ENCODE measurements at regions of chr9 and their contacts with region 1.

Region 1: DNA sequence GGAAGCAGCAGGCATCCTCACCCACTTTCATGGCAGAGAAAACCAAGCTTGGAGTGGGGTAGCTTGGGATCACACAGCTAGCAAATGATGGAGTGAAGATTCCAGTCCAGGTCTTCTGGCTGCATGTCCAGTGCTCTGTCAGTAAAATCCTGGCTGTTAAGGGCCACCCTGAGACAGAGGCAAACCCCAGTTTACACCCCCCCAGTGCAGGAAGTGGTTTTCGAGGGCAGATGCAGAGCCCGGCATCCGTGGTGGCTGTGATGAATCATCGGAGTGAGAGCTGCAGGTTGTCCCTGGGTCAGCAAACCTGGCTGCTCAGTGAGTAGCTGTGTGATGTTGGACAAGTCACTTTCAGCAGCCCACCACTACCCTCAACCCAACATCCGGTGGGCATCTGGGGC is 115.4 kb downstream of the RGS3 start:
- DNase-seq: peak; percentile 68
- ATAC-seq: peak; percentile 48
- H3K4me3 Mint-ChIP-seq: peak overlapping the region; percentile 53
- H3K27ac Mint-ChIP-seq: peak overlapping the region; percentile 94
- H3K4me1 Mint-ChIP-seq: peaks cover 79% of the 10 kb centered on the region
- H3K27me3 Mint-ChIP-seq: no peaks in the 10 kb centered on the region
- CTCF ChIP-seq: no peak

Region 2: GRCh38 chr9:113150670-113151611 is 427.9 kb before region 1 on chr9 and contains the start of gene SLC31A2:
- CTCF ChIA-PET with region 1: no interaction called
- POLR2A ChIA-PET with region 1: no interaction called
- intact Hi-C with region 1: loop called (anchors 1 kb)
- DNase-seq: peak; percentile 80
- ATAC-seq: peak; percentile 94
- H3K4me3 Mint-ChIP-seq: peak within 1 kb of the TSS; percentile 84
- H3K27ac Mint-ChIP-seq: no peak within 1 kb of the TSS
- H3K4me1 Mint-ChIP-seq: peaks cover 13% of the 10 kb centered on the region
- H3K27me3 Mint-ChIP-seq: peaks cover 2% of the 10 kb centered on the region
- CTCF ChIP-seq: no peak
- total RNA-seq, gene SLC31A2: 0.93 and 1.1 TPM in 2 replicates

Region 3: DNA sequence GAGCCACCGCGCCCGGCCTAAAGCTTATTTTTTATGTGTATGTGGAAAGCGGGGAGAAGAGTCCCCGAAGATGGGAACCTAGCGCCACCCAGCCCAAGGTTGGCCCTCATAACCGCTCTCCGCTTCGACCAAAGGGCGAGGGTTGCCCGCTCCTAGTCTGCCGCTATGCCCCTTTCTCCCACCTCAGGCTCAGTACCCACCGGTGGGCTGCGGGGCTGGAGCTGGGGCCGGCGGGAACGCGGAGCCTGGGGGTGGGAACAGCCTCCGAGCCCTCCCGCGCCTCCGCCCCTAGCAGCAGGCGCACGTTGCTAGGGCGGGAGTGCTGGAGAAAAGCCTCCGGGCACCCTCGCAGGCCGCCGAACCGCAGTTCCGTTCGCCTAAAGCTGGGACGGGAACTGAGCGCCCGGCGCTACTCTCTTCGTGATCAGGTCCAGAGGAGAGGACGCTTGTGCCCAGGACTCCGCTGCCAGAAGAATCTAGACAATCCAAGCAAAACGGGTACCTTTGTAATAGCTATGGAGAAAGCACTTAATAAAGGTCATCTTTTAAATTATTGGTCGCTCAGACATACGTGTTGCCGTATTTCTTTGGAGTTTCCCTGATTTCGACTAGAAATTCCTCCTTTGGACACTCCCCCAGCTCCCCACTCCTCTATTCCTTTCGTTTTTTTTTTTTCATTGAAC is 238.7 kb before region 1 on chr9 and contains the start of gene WDR31:
- CTCF ChIA-PET with region 1: no interaction called
- POLR2A ChIA-PET with region 1: no interaction called
- intact Hi-C with region 1: loop called (anchors 2 kb)
- DNase-seq: peak; percentile 78
- ATAC-seq: peak; percentile 98
- H3K4me3 Mint-ChIP-seq: peak within 1 kb of the TSS; percentile 84
- H3K27ac Mint-ChIP-seq: peak within 1 kb of the TSS; percentile 74
- H3K4me1 Mint-ChIP-seq: peaks cover 11% of the 10 kb centered on the region
- H3K27me3 Mint-ChIP-seq: peaks cover 3% of the 10 kb centered on the region
- CTCF ChIP-seq: no peak
- total RNA-seq, gene WDR31: 0.73 and 1.6 TPM in 2 replicates

Region 4: GRCh38 chr9:113410207-113410864 is 168.5 kb before region 1 on chr9 and contains the starts of genes C9orf43 and POLE3:
- CTCF ChIA-PET with region 1: interaction called, 6 read pairs
- POLR2A ChIA-PET with region 1: interaction called, 83 read pairs
- intact Hi-C with region 1: loop called (anchors 1 kb)
- DNase-seq: peak; percentile 94
- ATAC-seq: peak; percentile 89
- H3K4me3 Mint-ChIP-seq: peak within 1 kb of the TSS; percentile 98
- H3K27ac Mint-ChIP-seq: peak within 1 kb of the TSS; percentile 99
- H3K4me1 Mint-ChIP-seq: peaks cover 31% of the 10 kb centered on the region
- H3K27me3 Mint-ChIP-seq: no peaks in the 10 kb centered on the region
- CTCF ChIP-seq: no peak
- total RNA-seq, gene C9orf43: 0.76 and 1.2 TPM in 2 replicates
- total RNA-seq, gene POLE3: 48.0 and 55.5 TPM in 2 replicates

Region 5: DNA sequence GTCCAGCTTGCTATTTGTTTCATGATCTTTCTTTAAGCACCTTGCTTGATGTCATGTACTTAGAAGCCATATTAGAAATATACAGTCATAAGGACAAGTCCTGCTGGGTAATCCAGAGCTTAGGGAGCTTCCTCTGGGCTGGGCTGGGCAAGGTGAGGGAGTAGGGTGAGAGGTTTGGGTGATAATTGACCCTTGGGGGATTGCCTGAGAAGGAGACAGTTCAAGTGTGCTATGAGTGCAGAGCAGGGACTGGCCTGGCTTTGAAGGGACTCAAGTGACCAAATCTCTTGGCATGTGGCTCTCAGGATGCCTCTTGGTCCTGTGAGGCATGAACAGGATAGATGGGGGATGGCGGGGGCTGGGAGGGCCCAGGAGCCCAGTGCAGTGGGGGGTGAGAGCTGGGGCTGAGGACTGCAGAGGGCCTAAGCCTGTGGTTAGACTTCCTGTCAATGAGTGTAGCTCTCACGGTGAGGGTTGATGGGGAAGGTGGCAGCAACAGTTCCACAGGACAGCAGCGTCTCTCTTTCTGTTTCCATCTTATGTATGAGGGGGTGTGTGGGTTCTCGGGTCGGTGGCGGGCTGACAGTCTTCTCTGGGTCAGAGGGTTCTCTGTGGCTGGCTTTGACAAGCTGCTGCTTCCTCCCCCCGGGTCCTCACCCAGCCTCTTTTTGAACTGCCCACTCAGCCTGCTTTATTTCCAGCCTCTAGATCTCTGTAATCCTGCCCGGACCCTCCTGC is 61.9 kb before region 1 on chr9:
- CTCF ChIA-PET with region 1: interaction called, 4 read pairs
- POLR2A ChIA-PET with region 1: interaction called, 17 read pairs
- intact Hi-C with region 1: loop called (anchors 1 kb)
- DNase-seq: peak; percentile 26
- ATAC-seq: peak; percentile 95
- H3K4me3 Mint-ChIP-seq: peak overlapping the region; percentile 62
- H3K27ac Mint-ChIP-seq: peak overlapping the region; percentile 83
- H3K4me1 Mint-ChIP-seq: peaks cover 29% of the 10 kb centered on the region
- H3K27me3 Mint-ChIP-seq: no peaks in the 10 kb centered on the region
- CTCF ChIP-seq: no peak

Region 6: GRCh38 chr9:113591001-113591898 is 12.4 kb after region 1 on chr9:
- CTCF ChIA-PET with region 1: interaction called, 20 read pairs
- POLR2A ChIA-PET with region 1: interaction called, 3 read pairs
- intact Hi-C with region 1: no loop called
- DNase-seq: peak; percentile 67
- ATAC-seq: peak; percentile 71
- H3K4me3 Mint-ChIP-seq: no peak overlapping the region
- H3K27ac Mint-ChIP-seq: no peak overlapping the region
- H3K4me1 Mint-ChIP-seq: peaks cover 14% of the 10 kb centered on the region
- H3K27me3 Mint-ChIP-seq: no peaks in the 10 kb centered on the region
- CTCF ChIP-seq: no peak

Measured in activated B cell treated with CpG ODN at 0.5 μM for 24 hours (primary cell).